Ascending aorta (tissue), 2 donors: ENCODE measurements at regions of chr20 and their contacts with region 1.

Region 1: DNA sequence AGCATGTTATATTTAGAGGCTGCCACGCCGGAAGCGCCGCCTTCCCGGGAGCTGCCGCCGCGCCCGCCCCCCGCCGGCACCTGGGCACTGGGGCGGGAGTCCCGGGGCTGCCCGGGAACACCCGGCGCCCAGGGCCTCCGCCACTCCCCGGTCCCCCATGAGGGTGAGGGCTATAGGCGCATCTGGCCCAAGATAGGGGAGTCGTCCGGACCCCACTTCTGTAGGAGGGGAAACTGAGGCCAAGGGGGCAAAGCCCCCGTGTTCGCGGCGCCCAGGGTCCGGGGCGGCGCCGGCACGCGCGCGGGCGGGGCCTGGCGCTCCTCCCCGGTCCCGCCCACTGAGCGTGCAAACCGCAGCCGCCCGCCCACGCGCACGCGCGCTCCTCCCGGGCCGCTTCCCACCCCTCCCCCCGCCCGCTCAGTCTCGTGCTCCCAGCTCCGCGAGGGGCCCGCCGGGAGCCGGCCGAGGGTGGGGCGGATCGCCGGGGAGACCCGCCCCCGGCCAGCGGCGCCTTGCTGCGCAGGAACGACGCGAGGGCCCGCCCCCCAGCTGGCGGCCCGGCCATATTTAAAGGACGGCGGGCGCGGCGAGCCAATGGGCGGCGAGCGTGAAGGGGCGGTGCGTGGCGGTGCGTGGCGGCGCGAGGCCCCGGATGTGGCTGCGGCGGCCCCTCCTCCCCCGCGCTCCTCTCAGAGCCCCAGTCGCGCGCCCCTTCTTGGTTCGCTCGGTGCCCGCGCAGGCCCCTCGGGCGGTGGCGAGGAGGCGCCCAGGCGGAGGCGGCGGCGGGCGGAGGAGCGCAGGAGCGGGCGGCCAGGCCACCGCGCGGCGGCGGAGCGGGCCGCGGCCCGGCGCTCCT is at the start of gene LSM14B:
- DNase-seq: peak; percentile 84 to 98
- H3K4me3 ChIP-seq: peak within 1 kb of the TSS; percentile 70 to 84
- H3K27ac ChIP-seq: peak within 1 kb of the TSS; percentile 97 to 98
- H3K4me1 ChIP-seq: peaks cover 0 to 26% of the 10 kb centered on the region in 2 donors
- H3K27me3 ChIP-seq: no peaks in the 10 kb centered on the region
- CTCF ChIP-seq: no peak
- total RNA-seq, gene LSM14B: 27.6 TPM

Region 2: GRCh38 chr20:62143118-62143973 is 21.3 kb after region 1 on chr20 and contains the starts of genes PSMA7 and SS18L1:
- intact Hi-C with region 1: loop called (anchors 1 kb)
- DNase-seq: peak in 1 of 2 donors; percentile 91
- H3K4me3 ChIP-seq: peak within 1 kb of the TSS; percentile 91 to 99
- H3K27ac ChIP-seq: peak within 1 kb of the TSS; percentile 92 to 97
- H3K4me1 ChIP-seq: peaks cover 9 to 31% of the 10 kb centered on the region in 2 donors
- H3K27me3 ChIP-seq: no peaks in the 10 kb centered on the region
- CTCF ChIP-seq: peak in 1 of 3 experiments; percentile 6
- total RNA-seq, gene PSMA7: 301 TPM
- total RNA-seq, gene SS18L1: 39.8 TPM

Region 3: GRCh38 chr20:62606551-62607201 is 484.7 kb after region 1 on chr20:
- intact Hi-C with region 1: no loop called
- DNase-seq: no peak
- H3K4me3 ChIP-seq: no peak overlapping the region
- H3K27ac ChIP-seq: no peak overlapping the region
- H3K4me1 ChIP-seq: peaks cover 3 to 5% of the 10 kb centered on the region in 2 donors
- H3K27me3 ChIP-seq: no peaks in the 10 kb centered on the region
- CTCF ChIP-seq: no peak

Region 4: DNA sequence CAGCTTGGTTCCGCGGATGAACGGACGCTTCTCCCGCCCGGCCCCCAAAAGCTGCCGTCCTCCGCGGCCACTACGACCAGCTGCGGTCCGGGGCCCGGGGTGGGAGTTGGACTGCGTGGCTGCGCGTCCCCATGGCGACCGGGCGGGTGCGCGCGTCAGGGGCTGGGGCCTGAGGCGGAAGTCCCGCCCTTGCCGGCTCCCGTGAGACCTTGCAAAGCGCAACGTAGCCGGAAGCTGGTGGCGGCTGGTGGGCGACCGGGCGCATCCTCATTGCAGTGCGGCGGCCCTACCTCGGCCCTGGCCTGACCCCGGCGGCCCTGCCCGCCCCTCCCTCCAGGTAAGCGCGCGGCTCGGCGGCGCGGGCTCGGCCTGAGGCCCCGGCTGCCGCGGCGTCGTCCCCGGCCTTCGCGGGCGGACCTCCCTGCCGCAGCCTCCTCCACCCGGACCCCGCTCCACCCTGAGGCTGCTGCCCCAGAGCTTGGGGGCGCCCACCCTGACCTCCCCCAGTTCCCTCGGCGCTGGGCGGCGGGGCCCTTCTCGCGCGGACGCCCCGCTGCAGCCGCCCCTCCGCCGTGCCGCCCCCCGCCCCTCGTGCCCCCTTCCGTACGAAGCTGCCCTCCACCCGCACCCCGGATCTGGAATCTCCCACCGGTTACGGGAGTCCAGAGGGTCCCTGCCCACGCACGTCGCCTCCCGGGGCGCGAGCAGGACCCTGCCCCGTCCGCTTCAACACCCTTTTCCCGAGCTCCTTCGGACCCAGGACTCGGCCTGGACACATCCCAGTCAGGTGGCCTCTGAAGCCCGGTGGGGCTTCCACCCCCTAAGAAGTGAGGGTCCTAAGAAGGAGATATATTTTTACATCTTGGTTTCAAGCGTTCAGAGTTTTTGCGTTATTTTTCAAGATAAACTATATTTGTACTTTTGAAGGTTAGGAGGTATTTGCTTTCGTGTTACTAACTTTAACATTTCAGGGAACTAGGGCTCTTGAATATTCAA is 1150.9 kb after region 1 on chr20 and contains the start of gene ARFGAP1:
- intact Hi-C with region 1: loop called (anchors 5 kb)
- DNase-seq: peak; percentile 36 to 92
- H3K4me3 ChIP-seq: peak within 1 kb of the TSS; percentile 91 to 99
- H3K27ac ChIP-seq: peak within 1 kb of the TSS; percentile 52 to 56
- H3K4me1 ChIP-seq: peaks cover 6 to 17% of the 10 kb centered on the region in 2 donors
- H3K27me3 ChIP-seq: no peaks in the 10 kb centered on the region
- CTCF ChIP-seq: no peak
- total RNA-seq, gene ARFGAP1: 57.0 TPM